ENCODE measurements at regions of chr6 and their contacts with region 1.

Region 1: GRCh38 chr6:127496471-127496870 is 22.7 kb downstream of the MTCL3 start:
- DNase-seq: no peak
- ATAC-seq: no peak
- H3K4me3 ChIP-seq: no peak overlapping the region
- H3K27ac ChIP-seq: no peak overlapping the region
- H3K4me1 ChIP-seq: no peaks in the 10 kb centered on the region
- H3K27me3 ChIP-seq: no peaks in the 10 kb centered on the region
- CTCF ChIP-seq: peak in 1 of 3 experiments; percentile 35; a peak in 3 of 6 replicates
- POLR2A ChIP-seq: no peak
- RAD21 ChIP-seq: no peak

Region 2: DNA sequence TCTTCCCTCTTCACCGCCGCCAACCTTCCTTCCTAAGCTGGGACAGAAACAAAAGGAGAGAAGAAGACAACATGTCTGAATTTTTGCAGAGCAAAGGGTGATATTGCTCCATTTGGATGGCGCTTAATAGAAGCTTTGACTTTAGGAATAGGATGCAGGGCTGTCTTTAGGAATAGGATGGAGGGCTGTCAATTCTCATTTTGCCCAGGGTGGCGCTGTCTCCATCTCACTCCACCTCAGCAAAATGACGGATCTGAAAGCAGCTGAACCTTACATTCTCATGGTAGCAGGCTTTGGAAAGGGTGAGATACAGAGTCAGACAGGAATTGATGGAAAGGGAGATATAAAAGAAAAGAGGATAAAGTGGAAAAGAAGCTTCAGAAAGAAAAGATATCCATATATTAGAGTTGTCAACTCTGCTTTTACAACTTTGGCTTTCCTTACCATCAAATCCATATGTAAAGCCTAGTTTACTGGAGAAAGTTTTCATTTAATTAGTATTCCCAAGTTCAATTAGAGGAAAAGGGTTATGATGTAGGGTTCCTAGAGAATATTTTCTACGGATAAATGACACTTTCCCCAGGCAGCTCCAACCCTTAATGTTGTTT is 20.3 kb after region 1 on chr6:
- CTCF ChIA-PET with region 1: interaction called, 24 read pairs
- POLR2A ChIA-PET with region 1: no interaction called
- RAD21 ChIA-PET with region 1: no interaction called
- intact Hi-C with region 1: no loop called
- DNase-seq: peak; percentile 39
- ATAC-seq: peak; percentile 82
- H3K4me3 ChIP-seq: peak overlapping the region; percentile 40 to 56
- H3K27ac ChIP-seq: no peak overlapping the region
- H3K4me1 ChIP-seq: peaks cover 0 to 4% of the 10 kb centered on the region in 2 experiments; a peak in 1 of 4 replicates
- H3K27me3 ChIP-seq: no peaks in the 10 kb centered on the region
- CTCF ChIP-seq: peak; percentile 46 to 91 (median 91); a peak in 5 of 6 replicates
- POLR2A ChIP-seq: no peak
- RAD21 ChIP-seq: no peak

Measured in HCT116 (cell line).